A673 (cell line): ENCODE measurements at regions of chr16 and their contacts with region 1.

Region 1: GRCh38 chr16:46632778-46633733 is 11.9 kb upstream of the SHCBP1 start:
- DNase-seq: no peak
- H3K4me3 ChIP-seq: no peak overlapping the region
- H3K27ac ChIP-seq: no peak overlapping the region
- H3K4me1 ChIP-seq: peaks cover 6% of the 10 kb centered on the region
- H3K27me3 ChIP-seq: no peaks in the 10 kb centered on the region
- CTCF ChIP-seq: no peak

Region 2: DNA sequence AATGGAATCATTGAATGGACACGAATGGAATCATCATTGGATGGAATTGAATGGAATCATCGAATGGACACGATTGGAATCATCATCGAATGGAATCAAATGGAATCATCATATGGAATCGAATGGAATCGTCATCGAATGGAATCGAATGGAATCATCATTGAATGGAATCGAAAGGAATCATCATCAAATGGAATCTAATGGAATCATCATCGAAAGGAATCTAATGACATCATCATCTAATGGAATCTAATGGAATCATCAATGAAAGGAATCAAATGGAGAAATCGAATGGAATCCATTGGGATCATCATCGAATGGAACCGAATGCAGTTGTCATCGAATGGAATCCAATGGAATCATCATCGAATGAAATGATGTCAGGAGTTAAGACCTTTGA is 166.8 kb before region 1 on chr16:
- CTCF ChIA-PET with region 1: no interaction called
- POLR2A ChIA-PET with region 1: no interaction called
- intact Hi-C with region 1: no loop called
- DNase-seq: no peak
- H3K4me3 ChIP-seq: no peak overlapping the region
- H3K27ac ChIP-seq: no peak overlapping the region
- H3K4me1 ChIP-seq: no peaks in the 10 kb centered on the region
- H3K27me3 ChIP-seq: no peaks in the 10 kb centered on the region
- CTCF ChIP-seq: no peak

Region 3: DNA sequence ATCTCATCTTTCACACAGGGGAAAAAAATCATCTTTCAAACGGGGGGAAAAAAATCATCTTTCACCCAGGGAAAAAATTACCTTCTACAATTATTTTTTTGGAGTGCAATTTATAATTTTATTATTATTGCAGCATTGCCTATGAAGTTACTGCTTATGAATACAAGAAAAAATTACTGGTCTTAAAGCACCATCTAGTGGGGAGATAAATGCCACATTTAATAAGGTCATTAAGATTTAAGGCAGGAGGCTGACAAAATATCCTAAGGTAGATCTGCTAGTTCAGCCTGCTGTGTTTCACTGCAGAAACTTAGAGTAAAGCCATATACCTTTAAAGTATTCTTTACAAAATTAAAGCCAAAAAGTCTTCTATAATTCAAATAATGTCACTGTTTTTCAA is 25.5 kb before region 1 on chr16:
- CTCF ChIA-PET with region 1: no interaction called
- POLR2A ChIA-PET with region 1: interaction called, 18 read pairs
- intact Hi-C with region 1: no loop called
- DNase-seq: peak; percentile 54
- H3K4me3 ChIP-seq: no peak overlapping the region
- H3K27ac ChIP-seq: no peak overlapping the region
- H3K4me1 ChIP-seq: no peaks in the 10 kb centered on the region
- H3K27me3 ChIP-seq: no peaks in the 10 kb centered on the region
- CTCF ChIP-seq: peak; percentile 51

Region 4: GRCh38 chr16:46701615-46702014 is 68.6 kb after region 1 on chr16:
- CTCF ChIA-PET with region 1: no interaction called
- POLR2A ChIA-PET with region 1: no interaction called
- intact Hi-C with region 1: no loop called
- DNase-seq: no peak
- H3K4me3 ChIP-seq: no peak overlapping the region
- H3K27ac ChIP-seq: no peak overlapping the region
- H3K4me1 ChIP-seq: no peaks in the 10 kb centered on the region
- H3K27me3 ChIP-seq: no peaks in the 10 kb centered on the region
- CTCF ChIP-seq: no peak

Region 5: GRCh38 chr16:46884513-46885293 is 251.6 kb after region 1 on chr16:
- CTCF ChIA-PET with region 1: interaction called, 14 read pairs
- POLR2A ChIA-PET with region 1: no interaction called
- intact Hi-C with region 1: no loop called
- DNase-seq: peak; percentile 21
- H3K4me3 ChIP-seq: peak overlapping the region; percentile 96
- H3K27ac ChIP-seq: peak overlapping the region; percentile 80
- H3K4me1 ChIP-seq: peaks cover 21% of the 10 kb centered on the region
- H3K27me3 ChIP-seq: no peaks in the 10 kb centered on the region
- CTCF ChIP-seq: no peak